Posterior vena cava (tissue), 2 donors: ENCODE measurements at regions of chr11 and their contacts with region 1.

Region 1: GRCh38 chr11:34473606-34474169 is 35.0 kb downstream of the CAT start:
- DNase-seq: no peak

Region 2: GRCh38 chr11:33399421-33399820 is 1074.3 kb before region 1 on chr11:
- intact Hi-C with region 1: loop called in 1 of 2 experiments (anchors 5 kb)
- DNase-seq: no peak